Colonic mucosa (tissue), 4 donors: ENCODE measurements at regions of chr1 and their contacts with region 1.

Region 1: GRCh38 chr1:161367684-161368400 is at the start of gene CFAP126:
- DNase-seq: peak; percentile 38
- H3K4me3 ChIP-seq: no peak within 1 kb of the TSS
- H3K27ac ChIP-seq: no peak within 1 kb of the TSS
- H3K4me1 ChIP-seq: no peaks in the 10 kb centered on the region
- H3K27me3 ChIP-seq: no peaks in the 10 kb centered on the region
- CTCF ChIP-seq: no peak
- total RNA-seq, gene CFAP126: not detected

Region 2: DNA sequence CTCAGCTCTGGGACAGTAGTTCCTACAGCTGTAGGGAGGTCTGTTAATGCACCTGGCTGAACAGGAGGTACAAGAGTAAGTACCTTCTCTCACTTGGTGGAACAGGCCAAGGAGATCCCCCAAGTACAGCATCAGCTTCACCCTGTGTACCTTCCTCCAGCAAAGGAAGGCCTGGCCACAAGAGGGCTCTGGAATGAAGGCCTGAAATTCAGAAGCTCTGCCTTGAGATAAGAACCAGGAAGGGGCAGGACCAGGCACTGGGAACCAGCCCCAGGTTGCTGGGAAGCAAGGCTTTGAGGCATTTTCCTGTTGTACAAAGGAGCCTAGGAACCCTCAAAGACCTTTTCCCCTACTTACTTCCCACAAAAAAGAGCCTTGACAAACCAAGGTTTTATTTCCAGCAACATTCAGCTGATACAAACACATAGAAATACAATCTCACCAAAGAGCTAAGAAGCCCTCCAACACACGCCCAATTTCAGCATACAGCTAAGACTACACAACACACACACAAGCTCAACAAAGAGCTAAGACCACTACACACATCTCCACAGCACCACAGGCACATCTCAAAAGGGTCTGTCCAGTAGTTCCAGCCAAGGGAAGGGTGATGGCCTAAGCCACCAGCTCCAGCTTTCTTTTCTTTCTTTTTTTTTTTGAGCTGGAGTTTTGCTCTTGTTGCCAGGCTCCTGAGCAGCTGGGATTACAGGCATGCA is 370.4 kb before region 1 on chr1:
- intact Hi-C with region 1: no loop called
- DNase-seq: peak; percentile 79
- H3K4me3 ChIP-seq: no peak overlapping the region
- H3K27ac ChIP-seq: peak overlapping the region; percentile 63
- H3K4me1 ChIP-seq: no peaks in the 10 kb centered on the region
- H3K27me3 ChIP-seq: no peaks in the 10 kb centered on the region
- CTCF ChIP-seq: peak; percentile 58

Region 3: GRCh38 chr1:161209790-161210409 is 157.9 kb before region 1 on chr1:
- intact Hi-C with region 1: loop called (anchors 5 kb)
- DNase-seq: peak; percentile 73
- H3K4me3 ChIP-seq: no peak overlapping the region
- H3K27ac ChIP-seq: no peak overlapping the region
- H3K4me1 ChIP-seq: no peaks in the 10 kb centered on the region
- H3K27me3 ChIP-seq: no peaks in the 10 kb centered on the region
- CTCF ChIP-seq: peak; percentile 93

Region 4: DNA sequence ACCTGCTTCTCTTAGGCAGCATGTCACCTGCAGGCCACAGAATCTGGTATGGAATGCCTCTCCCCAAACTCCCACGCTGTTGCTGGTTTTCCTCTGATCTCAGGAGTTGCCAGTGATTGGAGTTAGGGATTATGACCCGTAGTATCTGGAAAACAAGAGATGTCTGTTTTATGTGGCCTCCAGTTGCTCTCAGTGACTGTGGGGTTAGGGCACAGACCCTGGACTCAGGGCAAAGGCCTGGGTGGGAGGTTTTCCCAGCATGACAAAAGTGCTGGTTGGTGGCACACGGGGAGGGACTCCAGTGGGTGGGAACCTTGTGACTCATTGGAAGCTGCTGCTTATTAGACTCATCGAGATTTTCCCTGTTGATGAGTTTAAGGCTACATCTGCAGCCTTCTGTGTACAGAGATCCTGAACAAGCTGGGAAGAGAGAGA is 129.8 kb before region 1 on chr1 and contains the start of gene NR1I3:
- intact Hi-C with region 1: no loop called
- DNase-seq: no peak
- H3K4me3 ChIP-seq: no peak within 1 kb of the TSS
- H3K27ac ChIP-seq: no peak within 1 kb of the TSS
- H3K4me1 ChIP-seq: no peaks in the 10 kb centered on the region
- H3K27me3 ChIP-seq: no peaks in the 10 kb centered on the region
- CTCF ChIP-seq: no peak
- total RNA-seq, gene NR1I3: not detected

Region 5: GRCh38 chr1:161274874-161275273 is 93.0 kb before region 1 on chr1:
- intact Hi-C with region 1: no loop called
- DNase-seq: no peak
- H3K4me3 ChIP-seq: no peak overlapping the region
- H3K27ac ChIP-seq: no peak overlapping the region
- H3K4me1 ChIP-seq: no peaks in the 10 kb centered on the region
- H3K27me3 ChIP-seq: no peaks in the 10 kb centered on the region
- CTCF ChIP-seq: no peak